WTC11 (cell line): ENCODE measurements at regions of chr11 and their contacts with region 1.

Region 1: DNA sequence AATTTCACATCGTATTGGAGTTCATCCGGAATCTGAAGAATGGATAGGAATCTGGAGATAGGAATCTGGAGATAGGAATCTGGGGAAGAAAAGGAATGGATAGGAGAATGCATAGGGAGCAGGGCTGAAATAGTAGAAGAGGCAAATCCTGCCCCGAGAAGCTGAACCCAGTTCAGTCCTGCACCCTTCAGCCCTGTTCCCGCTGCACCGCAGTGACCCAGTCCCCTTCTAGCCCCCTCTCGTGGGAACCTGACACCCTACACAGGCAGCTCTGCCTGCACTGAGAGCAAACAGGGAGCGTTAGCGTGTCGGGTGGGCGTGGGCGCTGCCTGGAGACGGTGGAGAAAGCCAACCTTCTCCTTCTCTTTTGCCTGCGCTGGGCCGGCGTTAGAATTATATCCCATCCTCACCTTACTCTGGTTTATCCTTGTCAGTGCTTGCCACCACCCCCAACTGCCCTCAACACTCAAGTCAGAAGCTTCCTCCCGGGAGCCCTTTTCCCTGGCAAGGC is 1.0 kb upstream of the CCKBR start:
- DNase-seq: peak; percentile 36
- ATAC-seq: peak; percentile 40
- H3K4me3 Mint-ChIP-seq: no peak overlapping the region; the same call in none of the 2 replicates
- H3K27ac Mint-ChIP-seq: no peak overlapping the region
- H3K4me1 Mint-ChIP-seq: no peaks in the 10 kb centered on the region
- H3K27me3 Mint-ChIP-seq: no peaks in the 10 kb centered on the region
- CTCF ChIP-seq: no peak

Region 2: DNA sequence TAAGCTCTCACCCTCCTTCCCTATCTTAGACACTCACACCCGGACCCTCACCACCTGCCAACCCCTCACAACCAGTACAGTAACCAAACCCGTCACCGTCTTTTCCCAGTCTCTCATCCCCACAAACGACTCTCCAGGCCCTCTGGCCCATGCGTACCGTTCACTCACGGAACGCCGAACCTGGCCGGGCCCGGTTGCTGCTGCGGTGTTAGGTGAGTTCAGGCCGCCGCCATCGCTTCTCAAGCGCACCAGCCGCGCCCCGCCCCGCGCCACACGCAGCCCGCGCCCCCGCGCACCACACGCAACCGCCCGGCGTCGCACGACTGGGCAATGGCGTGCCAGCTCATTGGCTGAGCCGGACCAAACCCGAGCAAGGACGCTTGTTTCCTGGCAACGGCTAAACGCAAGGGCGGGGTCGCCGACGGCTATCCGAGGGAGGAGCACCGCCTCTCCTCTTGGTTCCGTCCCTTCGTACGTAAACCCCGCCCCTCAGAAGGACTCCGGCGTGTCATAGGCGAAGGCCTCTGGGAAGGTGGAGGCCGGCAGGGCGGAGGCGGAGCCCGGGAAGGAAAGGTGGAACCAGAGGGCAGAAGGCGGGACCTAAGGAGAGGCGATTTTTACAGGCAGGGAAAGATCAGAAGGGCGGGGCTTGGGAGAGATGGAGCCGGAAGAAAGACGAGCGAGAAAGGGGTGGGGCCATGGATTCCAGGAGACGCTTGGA is 24.1 kb before region 1 on chr11 and contains the start of gene FHIP1B:
- CTCF ChIA-PET with region 1: interaction called, 10 read pairs
- POLR2A ChIA-PET with region 1: no interaction called
- DNase-seq: peak; percentile 100
- ATAC-seq: peak; percentile 97
- H3K4me3 Mint-ChIP-seq: peak within 1 kb of the TSS; percentile 100
- H3K27ac Mint-ChIP-seq: peak within 1 kb of the TSS; percentile 96
- H3K4me1 Mint-ChIP-seq: peaks cover 13% of the 10 kb centered on the region
- H3K27me3 Mint-ChIP-seq: no peaks in the 10 kb centered on the region
- CTCF ChIP-seq: no peak
- total RNA-seq, gene FHIP1B: 22.2 to 24.8 TPM (median 23.6 TPM) in 3 replicates

Region 3: GRCh38 chr11:6285019-6285418 is 26.4 kb after region 1 on chr11:
- CTCF ChIA-PET with region 1: interaction called, 38 read pairs
- POLR2A ChIA-PET with region 1: interaction called, 3 read pairs
- DNase-seq: no peak
- ATAC-seq: no peak
- H3K4me3 Mint-ChIP-seq: no peak overlapping the region
- H3K27ac Mint-ChIP-seq: no peak overlapping the region
- H3K4me1 Mint-ChIP-seq: peaks cover 31% of the 10 kb centered on the region
- H3K27me3 Mint-ChIP-seq: peaks cover 98% of the 10 kb centered on the region
- CTCF ChIP-seq: no peak

Region 4: DNA sequence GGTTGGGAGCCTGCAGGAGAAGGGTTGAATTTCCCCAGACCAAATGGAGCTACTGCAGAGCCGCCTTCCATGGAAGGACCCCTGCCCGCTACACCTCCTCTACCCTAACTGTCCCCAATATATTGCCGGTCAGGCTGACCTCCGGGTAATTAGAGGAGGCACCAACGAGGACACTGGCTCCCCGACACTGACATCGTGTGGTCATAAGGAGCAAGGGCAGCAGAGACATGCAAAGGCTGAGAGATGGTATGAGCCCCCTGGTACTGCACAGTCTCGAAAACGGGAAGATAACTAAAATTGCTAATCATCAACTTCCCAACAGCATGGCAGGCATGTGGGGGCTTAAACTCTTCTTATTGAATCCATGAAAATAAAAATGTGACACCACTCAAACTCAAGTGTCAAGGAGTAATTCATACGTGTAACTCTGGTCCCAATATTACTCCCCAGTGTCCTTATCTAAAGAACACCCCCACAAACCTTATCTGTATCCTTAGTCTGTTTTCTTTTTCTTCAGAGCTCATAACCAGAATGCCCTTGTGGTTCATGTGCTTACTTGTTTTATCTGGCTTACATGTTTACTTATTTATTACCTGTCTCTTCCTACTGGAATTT is 57.3 kb after region 1 on chr11:
- CTCF ChIA-PET with region 1: interaction called, 22 read pairs
- POLR2A ChIA-PET with region 1: interaction called, 9 read pairs
- DNase-seq: peak; percentile 68
- ATAC-seq: peak; percentile 65
- H3K4me3 Mint-ChIP-seq: no peak overlapping the region
- H3K27ac Mint-ChIP-seq: no peak overlapping the region
- H3K4me1 Mint-ChIP-seq: peaks cover 22% of the 10 kb centered on the region
- H3K27me3 Mint-ChIP-seq: peaks cover 9% of the 10 kb centered on the region
- CTCF ChIP-seq: peak; percentile 69